Right cardiac atrium (tissue), 5 donors: ENCODE measurements at regions of chr7 and their contacts with region 1.

Region 1: GRCh38 chr7:96224685-96225084 is 97.2 kb downstream of the SLC25A13 start:
- DNase-seq: no peak
- ATAC-seq: peak in 1 of 2 donors; percentile 37
- H3K4me3 ChIP-seq: no peak overlapping the region
- H3K27ac ChIP-seq: no peak overlapping the region
- H3K4me1 ChIP-seq: peaks cover 1% of the 10 kb centered on the region
- H3K27me3 ChIP-seq: no peaks in the 10 kb centered on the region

Region 2: DNA sequence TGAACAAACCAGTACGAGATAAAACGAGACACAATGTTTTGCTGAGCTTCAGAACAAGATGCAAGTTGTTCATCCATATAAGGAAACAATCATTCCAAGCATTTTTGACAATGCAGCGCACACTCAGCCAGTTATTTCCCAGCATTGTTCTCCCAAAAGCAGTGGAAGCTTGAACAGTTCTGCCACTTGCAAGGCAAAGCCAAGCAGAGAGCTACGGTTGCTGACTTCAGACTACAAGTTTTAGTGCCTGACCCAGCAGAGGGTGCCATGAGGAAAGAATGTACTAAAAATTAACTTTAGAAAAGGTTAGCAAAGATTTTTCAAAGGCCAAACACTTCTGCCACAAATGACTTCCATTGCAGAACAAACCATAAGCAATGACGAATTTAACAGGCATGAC is 55.2 kb before region 1 on chr7:
- intact Hi-C with region 1: no loop called
- DNase-seq: no peak
- ATAC-seq: no peak
- H3K4me3 ChIP-seq: no peak overlapping the region
- H3K27ac ChIP-seq: no peak overlapping the region
- H3K4me1 ChIP-seq: no peaks in the 10 kb centered on the region
- H3K27me3 ChIP-seq: no peaks in the 10 kb centered on the region

Region 3: GRCh38 chr7:96414931-96415292 is 190.2 kb after region 1 on chr7:
- intact Hi-C with region 1: no loop called
- DNase-seq: peak in 1 of 3 donors; percentile 31
- ATAC-seq: peak; percentile 68 to 69
- H3K4me3 ChIP-seq: no peak overlapping the region
- H3K27ac ChIP-seq: no peak overlapping the region
- H3K4me1 ChIP-seq: peaks cover 2% of the 10 kb centered on the region
- H3K27me3 ChIP-seq: no peaks in the 10 kb centered on the region

Region 4: GRCh38 chr7:96558530-96558929 is 333.8 kb after region 1 on chr7:
- intact Hi-C with region 1: loop called in 1 of 4 experiments (anchors 10 kb)
- DNase-seq: no peak
- ATAC-seq: no peak
- H3K4me3 ChIP-seq: no peak overlapping the region
- H3K27ac ChIP-seq: no peak overlapping the region
- H3K4me1 ChIP-seq: no peaks in the 10 kb centered on the region
- H3K27me3 ChIP-seq: no peaks in the 10 kb centered on the region